ENCODE measurements at regions of chr4 and their contacts with region 1.

Region 1: GRCh38 chr4:58940167-58940566 is 1830.0 kb upstream of the IGFBP7 start:
- DNase-seq: no peak
- ATAC-seq: no peak
- H3K4me3 ChIP-seq: no peak overlapping the region
- H3K27ac ChIP-seq: no peak overlapping the region
- H3K4me1 ChIP-seq: no peaks in the 10 kb centered on the region
- H3K27me3 ChIP-seq: no peaks in the 10 kb centered on the region
- CTCF ChIP-seq: no peak
- EP300 ChIP-seq: no peak
- POLR2A ChIP-seq: no peak
- RAD21 ChIP-seq: no peak

Region 2: GRCh38 chr4:58649226-58649625 is 290.9 kb before region 1 on chr4:
- CTCF ChIA-PET with region 1: no interaction called
- POLR2A ChIA-PET with region 1: no interaction called
- in situ Hi-C with region 1: no loop called
- intact Hi-C with region 1: no loop called
- DNase-seq: no peak
- ATAC-seq: no peak
- H3K4me3 ChIP-seq: no peak overlapping the region
- H3K27ac ChIP-seq: no peak overlapping the region
- H3K4me1 ChIP-seq: no peaks in the 10 kb centered on the region
- H3K27me3 ChIP-seq: no peaks in the 10 kb centered on the region
- CTCF ChIP-seq: no peak
- EP300 ChIP-seq: no peak
- POLR2A ChIP-seq: no peak
- RAD21 ChIP-seq: no peak

Region 3: DNA sequence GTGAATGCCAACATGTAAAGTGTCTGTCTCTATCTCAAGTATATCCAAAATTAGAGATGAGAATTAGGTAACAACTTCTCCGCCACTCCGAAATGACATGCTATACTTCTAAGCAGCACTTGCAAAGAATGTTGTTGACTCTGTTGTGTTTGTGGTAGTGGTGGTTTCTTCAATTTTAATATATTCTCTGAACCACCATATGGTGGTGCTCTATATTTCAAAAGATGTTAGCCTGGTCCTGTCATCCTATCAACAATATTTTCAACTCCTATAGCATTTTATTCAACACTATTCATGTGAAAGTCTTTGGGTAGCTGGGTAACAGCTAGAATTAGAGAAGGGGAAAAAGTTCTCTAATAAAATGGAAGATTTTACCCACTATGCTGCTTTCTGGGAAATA is 207.2 kb before region 1 on chr4:
- CTCF ChIA-PET with region 1: no interaction called
- POLR2A ChIA-PET with region 1: no interaction called
- in situ Hi-C with region 1: no loop called
- intact Hi-C with region 1: no loop called
- DNase-seq: no peak
- ATAC-seq: no peak
- H3K4me3 ChIP-seq: no peak overlapping the region
- H3K27ac ChIP-seq: no peak overlapping the region
- H3K4me1 ChIP-seq: no peaks in the 10 kb centered on the region
- H3K27me3 ChIP-seq: no peaks in the 10 kb centered on the region
- CTCF ChIP-seq: no peak
- EP300 ChIP-seq: no peak
- POLR2A ChIP-seq: no peak
- RAD21 ChIP-seq: no peak

Region 4: GRCh38 chr4:58776627-58777026 is 163.5 kb before region 1 on chr4:
- CTCF ChIA-PET with region 1: no interaction called
- POLR2A ChIA-PET with region 1: no interaction called
- in situ Hi-C with region 1: no loop called
- intact Hi-C with region 1: no loop called
- DNase-seq: no peak
- ATAC-seq: no peak
- H3K4me3 ChIP-seq: no peak overlapping the region
- H3K27ac ChIP-seq: no peak overlapping the region
- H3K4me1 ChIP-seq: no peaks in the 10 kb centered on the region
- H3K27me3 ChIP-seq: no peaks in the 10 kb centered on the region
- CTCF ChIP-seq: no peak
- EP300 ChIP-seq: no peak
- POLR2A ChIP-seq: no peak
- RAD21 ChIP-seq: no peak

Region 5: DNA sequence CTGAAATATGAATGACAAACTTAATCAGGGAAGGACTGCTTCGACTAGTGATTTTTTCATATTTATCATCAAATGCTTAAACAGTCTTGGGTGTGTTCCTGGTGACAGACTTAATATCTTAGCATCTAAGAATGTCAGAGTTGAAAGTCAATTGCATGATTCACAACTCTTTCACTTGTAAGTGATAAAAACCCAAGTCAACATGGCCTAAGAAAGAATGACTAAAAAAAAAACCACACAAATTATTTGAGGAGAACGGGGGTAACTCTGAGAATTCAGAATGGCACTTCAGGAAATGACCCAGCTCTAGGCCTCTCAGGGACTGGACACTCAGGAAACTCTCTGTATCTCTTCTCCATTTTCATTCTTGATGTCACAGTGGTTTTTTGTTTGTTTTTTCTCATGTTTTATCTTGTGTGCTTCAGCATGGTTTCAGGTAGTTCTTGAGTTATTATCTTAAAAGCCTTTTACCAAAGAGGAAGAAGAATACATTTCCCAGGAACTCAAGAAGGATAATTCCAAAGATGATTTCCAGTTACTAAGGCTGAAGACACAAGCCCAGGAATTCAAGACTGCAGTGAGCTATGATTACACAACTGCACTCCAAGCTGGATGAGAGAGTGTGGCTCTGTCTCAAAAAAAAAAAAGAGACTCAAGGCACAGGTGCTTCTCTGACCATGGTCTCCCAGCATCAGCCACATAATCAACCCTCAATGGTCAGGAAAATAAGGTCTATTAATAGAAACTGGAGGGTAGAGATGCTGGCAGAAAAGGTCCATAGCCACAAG is 132.1 kb before region 1 on chr4:
- CTCF ChIA-PET with region 1: no interaction called
- POLR2A ChIA-PET with region 1: no interaction called
- in situ Hi-C with region 1: loop called (anchors 25 kb)
- intact Hi-C with region 1: no loop called
- DNase-seq: no peak
- ATAC-seq: no peak
- H3K4me3 ChIP-seq: no peak overlapping the region
- H3K27ac ChIP-seq: no peak overlapping the region
- H3K4me1 ChIP-seq: no peaks in the 10 kb centered on the region
- H3K27me3 ChIP-seq: no peaks in the 10 kb centered on the region
- CTCF ChIP-seq: no peak
- EP300 ChIP-seq: no peak
- POLR2A ChIP-seq: no peak
- RAD21 ChIP-seq: no peak

Measured in K562 (cell line).